HCT116 (cell line): ENCODE measurements at regions of chr17 and their contacts with region 1.

Region 1: GRCh38 chr17:66255112-66255511 is 25.9 kb upstream of the APOH start:
- DNase-seq: peak; percentile 79
- ATAC-seq: peak; percentile 95
- H3K4me3 ChIP-seq: no peak overlapping the region
- H3K27ac ChIP-seq: no peak overlapping the region
- H3K4me1 ChIP-seq: peaks cover 0 to 4% of the 10 kb centered on the region in 2 experiments; a peak in 1 of 4 replicates
- H3K27me3 ChIP-seq: no peaks in the 10 kb centered on the region; the same call in 1 of the 2 replicates
- CTCF ChIP-seq: peak; percentile 75 to 97 (median 91)
- POLR2A ChIP-seq: no peak
- RAD21 ChIP-seq: peak; percentile 99

Region 2: DNA sequence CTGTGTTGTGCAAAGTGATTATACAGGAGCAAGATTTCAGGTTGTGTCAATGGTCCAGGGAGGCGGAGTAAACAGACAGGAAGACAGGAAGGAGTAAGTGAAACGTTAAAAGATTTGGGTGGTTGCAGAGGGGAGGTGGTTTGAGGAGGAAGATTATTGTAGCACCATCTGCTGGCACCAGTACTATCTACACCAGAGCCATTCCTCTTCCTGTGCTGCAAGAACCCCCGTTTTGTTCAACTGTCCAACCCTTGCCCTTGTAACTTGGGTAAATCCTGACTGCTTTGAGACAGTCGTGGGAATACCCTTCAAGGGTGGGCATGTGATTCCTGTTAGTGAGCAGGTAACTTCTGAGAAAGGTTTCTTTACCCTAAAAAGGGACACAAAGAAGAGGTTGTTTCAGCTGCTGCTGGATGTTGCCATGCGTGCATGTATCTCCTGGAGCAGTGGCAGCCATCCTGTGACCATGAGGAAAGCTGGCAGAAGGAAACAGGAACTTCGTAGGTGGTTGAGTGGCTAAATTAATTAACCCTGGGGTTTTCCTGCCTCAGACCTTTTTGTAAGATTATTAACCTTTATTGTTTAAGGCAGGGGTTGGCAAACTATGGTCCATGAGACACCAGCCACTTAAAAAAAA is 171.4 kb after region 1 on chr17:
- CTCF ChIA-PET with region 1: interaction called, 5 read pairs
- POLR2A ChIA-PET with region 1: no interaction called
- RAD21 ChIA-PET with region 1: no interaction called
- intact Hi-C with region 1: loop called (anchors 1 kb)
- DNase-seq: peak; percentile 31
- ATAC-seq: peak; percentile 98
- H3K4me3 ChIP-seq: no peak overlapping the region
- H3K27ac ChIP-seq: no peak overlapping the region
- H3K4me1 ChIP-seq: peaks cover 0 to 7% of the 10 kb centered on the region in 2 experiments; a peak in 1 of 4 replicates
- H3K27me3 ChIP-seq: no peaks in the 10 kb centered on the region
- CTCF ChIP-seq: peak; percentile 54 to 65 (median 63)
- POLR2A ChIP-seq: no peak
- RAD21 ChIP-seq: peak; percentile 76

Region 3: DNA sequence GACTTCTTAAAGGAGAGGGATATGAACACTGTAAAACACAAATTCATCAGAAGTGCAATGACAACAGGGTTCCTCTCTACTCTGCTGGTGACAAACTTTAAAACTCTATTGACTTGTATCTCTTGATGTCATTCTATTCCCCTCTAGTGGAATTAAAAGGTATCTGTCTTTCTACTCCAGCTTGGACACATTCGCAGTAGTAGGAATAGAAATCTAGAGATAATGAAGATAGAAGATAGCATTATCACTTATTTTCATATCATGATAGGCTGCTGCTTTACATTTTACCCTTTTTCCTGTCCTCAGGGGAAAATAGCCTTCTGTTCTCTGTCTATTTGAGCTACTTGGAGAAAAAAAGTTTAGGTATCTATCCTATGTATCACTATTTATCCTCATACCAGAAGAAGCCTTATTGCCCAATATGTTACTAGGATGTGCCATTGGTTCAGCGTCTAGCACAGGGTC is 370.2 kb after region 1 on chr17:
- CTCF ChIA-PET with region 1: interaction called, 6 read pairs
- POLR2A ChIA-PET with region 1: no interaction called
- RAD21 ChIA-PET with region 1: no interaction called
- intact Hi-C with region 1: loop called (anchors 1 kb)
- DNase-seq: peak; percentile 42
- ATAC-seq: peak; percentile 89
- H3K4me3 ChIP-seq: no peak overlapping the region
- H3K27ac ChIP-seq: no peak overlapping the region
- H3K4me1 ChIP-seq: no peaks in the 10 kb centered on the region
- H3K27me3 ChIP-seq: no peaks in the 10 kb centered on the region
- CTCF ChIP-seq: peak; percentile 51 to 80 (median 77)
- POLR2A ChIP-seq: no peak
- RAD21 ChIP-seq: peak; percentile 88